ENCODE measurements at regions of chr12 and their contacts with region 1.

Region 1: GRCh38 chr12:57983146-57983857 is 41.9 kb downstream of the ATP23 start:
- DNase-seq: peak in 3 of 9 experiments; percentile 11 to 39 (median 23)
- ATAC-seq: no peak
- H3K4me3 ChIP-seq: no peak overlapping the region
- H3K4me3 Mint-ChIP-seq: no peak overlapping the region
- H3K27ac ChIP-seq: no peak overlapping the region
- H3K27ac Mint-ChIP-seq: no peak overlapping the region
- H3K4me1 ChIP-seq: no peaks in the 10 kb centered on the region
- H3K4me1 Mint-ChIP-seq: no peaks in the 10 kb centered on the region
- H3K27me3 ChIP-seq: no peaks in the 10 kb centered on the region
- H3K27me3 Mint-ChIP-seq: peaks cover 18% of the 10 kb centered on the region
- CTCF ChIP-seq: peak; percentile 56

Region 2: GRCh38 chr12:57935839-57936512 is 47.3 kb before region 1 on chr12:
- CTCF ChIA-PET with region 1: no interaction called
- POLR2A ChIA-PET with region 1: no interaction called
- intact Hi-C with region 1: loop called in 1 of 2 experiments (anchors 1 kb)
- DNase-seq: peak; percentile 81 to 98 (median 90)
- ATAC-seq: peak; percentile 90
- H3K4me3 ChIP-seq: peak overlapping the region; percentile 49 to 61
- H3K4me3 Mint-ChIP-seq: peak overlapping the region; percentile 99
- H3K27ac ChIP-seq: peak overlapping the region; percentile 91 to 93
- H3K27ac Mint-ChIP-seq: peak overlapping the region; percentile 100
- H3K4me1 ChIP-seq: peaks cover 23% of the 10 kb centered on the region
- H3K4me1 Mint-ChIP-seq: peaks cover 40% of the 10 kb centered on the region
- H3K27me3 ChIP-seq: no peaks in the 10 kb centered on the region
- H3K27me3 Mint-ChIP-seq: no peaks in the 10 kb centered on the region
- CTCF ChIP-seq: no peak

Region 3: DNA sequence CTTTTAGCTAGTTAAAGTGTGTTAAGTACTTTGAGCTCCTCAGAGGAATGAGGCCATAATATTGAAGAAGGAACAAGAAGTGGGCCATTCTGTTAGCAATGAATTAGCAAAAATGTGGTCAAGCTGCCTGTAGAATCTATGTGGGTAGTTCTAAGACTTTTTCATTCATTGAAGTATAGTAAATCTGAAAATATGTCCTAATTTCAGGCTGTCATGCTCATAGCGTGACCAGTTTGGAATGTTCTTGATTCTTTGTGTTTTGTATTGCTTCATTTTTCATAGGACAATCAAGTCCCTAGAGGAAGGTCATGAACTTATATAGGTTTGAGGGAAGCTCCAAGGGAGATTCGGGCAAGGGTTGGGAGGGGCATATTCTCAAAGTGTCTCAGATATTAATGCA is 30.5 kb before region 1 on chr12:
- CTCF ChIA-PET with region 1: no interaction called
- POLR2A ChIA-PET with region 1: no interaction called
- intact Hi-C with region 1: no loop called
- DNase-seq: no peak
- ATAC-seq: no peak
- H3K4me3 ChIP-seq: no peak overlapping the region
- H3K4me3 Mint-ChIP-seq: no peak overlapping the region
- H3K27ac ChIP-seq: no peak overlapping the region
- H3K27ac Mint-ChIP-seq: no peak overlapping the region
- H3K4me1 ChIP-seq: no peaks in the 10 kb centered on the region
- H3K4me1 Mint-ChIP-seq: no peaks in the 10 kb centered on the region
- H3K27me3 ChIP-seq: no peaks in the 10 kb centered on the region
- H3K27me3 Mint-ChIP-seq: no peaks in the 10 kb centered on the region
- CTCF ChIP-seq: no peak

Region 4: DNA sequence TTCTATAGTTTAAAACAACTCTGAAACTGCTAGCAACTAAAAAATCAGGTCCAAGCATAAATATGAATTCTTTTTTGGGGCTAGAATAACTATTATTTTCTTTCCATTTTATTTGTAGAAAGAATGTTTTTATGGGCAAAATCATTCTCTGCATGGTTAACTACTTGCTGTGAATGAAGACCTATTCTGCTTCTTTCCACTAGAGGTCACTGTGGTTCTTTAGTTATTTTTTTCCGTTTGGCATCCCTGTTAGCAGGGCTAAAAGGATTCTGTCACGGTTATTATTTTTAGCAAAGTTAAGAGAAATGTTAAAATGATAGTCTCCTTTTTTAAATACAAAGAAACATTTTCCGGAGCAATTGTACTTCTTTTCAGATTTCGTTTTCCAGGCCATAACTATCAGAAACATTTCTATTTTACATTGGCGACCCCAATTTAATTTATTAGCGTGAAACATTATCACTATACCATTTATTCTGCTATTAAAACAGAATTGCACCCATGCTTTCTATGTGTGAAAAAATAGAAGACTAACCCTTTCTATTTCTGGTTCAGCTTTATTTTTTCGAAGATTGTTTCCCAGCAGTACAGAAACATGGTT is 362.8 kb after region 1 on chr12:
- CTCF ChIA-PET with region 1: no interaction called
- POLR2A ChIA-PET with region 1: no interaction called
- intact Hi-C with region 1: loop called in 1 of 2 experiments (anchors 2 kb)
- DNase-seq: peak in 2 of 9 experiments; percentile 9 to 22
- ATAC-seq: no peak
- H3K4me3 ChIP-seq: no peak overlapping the region
- H3K4me3 Mint-ChIP-seq: no peak overlapping the region
- H3K27ac ChIP-seq: no peak overlapping the region
- H3K27ac Mint-ChIP-seq: no peak overlapping the region
- H3K4me1 ChIP-seq: no peaks in the 10 kb centered on the region
- H3K4me1 Mint-ChIP-seq: no peaks in the 10 kb centered on the region
- H3K27me3 ChIP-seq: peaks cover 0 to 2% of the 10 kb centered on the region in 2 experiments
- H3K27me3 Mint-ChIP-seq: peaks cover 14% of the 10 kb centered on the region
- CTCF ChIP-seq: peak; percentile 91

Region 5: GRCh38 chr12:59149997-59150642 is 1166.8 kb after region 1 on chr12:
- CTCF ChIA-PET with region 1: no interaction called
- POLR2A ChIA-PET with region 1: no interaction called
- intact Hi-C with region 1: loop called (anchors 5 to 10 kb)
- DNase-seq: peak in 2 of 9 experiments; percentile 1 to 24
- ATAC-seq: no peak
- H3K4me3 ChIP-seq: no peak overlapping the region
- H3K4me3 Mint-ChIP-seq: no peak overlapping the region
- H3K27ac ChIP-seq: no peak overlapping the region
- H3K27ac Mint-ChIP-seq: no peak overlapping the region
- H3K4me1 ChIP-seq: no peaks in the 10 kb centered on the region
- H3K4me1 Mint-ChIP-seq: no peaks in the 10 kb centered on the region
- H3K27me3 ChIP-seq: no peaks in the 10 kb centered on the region
- H3K27me3 Mint-ChIP-seq: no peaks in the 10 kb centered on the region
- CTCF ChIP-seq: peak; percentile 29

Measured in CD8-positive, alpha-beta T cell (primary cell).